BJ (cell line): ENCODE measurements at regions of chr9 and their contacts with region 1.

Region 1: GRCh38 chr9:5719100-5719926 is 90.4 kb downstream of the RIC1 start:
- DNase-seq: no peak
- H3K4me3 ChIP-seq: no peak overlapping the region
- H3K27me3 ChIP-seq: no peaks in the 10 kb centered on the region
- CTCF ChIP-seq: no peak

Region 2: GRCh38 chr9:5735072-5735471 is 15.8 kb after region 1 on chr9:
- CTCF ChIA-PET with region 1: no interaction called
- POLR2A ChIA-PET with region 1: interaction called, 12 read pairs
- DNase-seq: no peak
- H3K4me3 ChIP-seq: no peak overlapping the region
- H3K27me3 ChIP-seq: no peaks in the 10 kb centered on the region
- CTCF ChIP-seq: no peak

Region 3: GRCh38 chr9:5764130-5764868 is 45.0 kb after region 1 on chr9:
- CTCF ChIA-PET with region 1: no interaction called
- POLR2A ChIA-PET with region 1: no interaction called
- DNase-seq: no peak
- H3K4me3 ChIP-seq: no peak overlapping the region
- H3K27me3 ChIP-seq: no peaks in the 10 kb centered on the region
- CTCF ChIP-seq: no peak

Region 4: GRCh38 chr9:6055213-6055612 is 335.9 kb after region 1 on chr9:
- CTCF ChIA-PET with region 1: no interaction called
- POLR2A ChIA-PET with region 1: no interaction called
- DNase-seq: peak; percentile 56
- H3K4me3 ChIP-seq: no peak overlapping the region
- H3K27me3 ChIP-seq: peaks cover 3% of the 10 kb centered on the region; the same call in 1 of the 2 replicates
- CTCF ChIP-seq: peak; percentile 52